Panc1 (cell line): ENCODE measurements at regions of chr4 and their contacts with region 1.

Region 1: DNA sequence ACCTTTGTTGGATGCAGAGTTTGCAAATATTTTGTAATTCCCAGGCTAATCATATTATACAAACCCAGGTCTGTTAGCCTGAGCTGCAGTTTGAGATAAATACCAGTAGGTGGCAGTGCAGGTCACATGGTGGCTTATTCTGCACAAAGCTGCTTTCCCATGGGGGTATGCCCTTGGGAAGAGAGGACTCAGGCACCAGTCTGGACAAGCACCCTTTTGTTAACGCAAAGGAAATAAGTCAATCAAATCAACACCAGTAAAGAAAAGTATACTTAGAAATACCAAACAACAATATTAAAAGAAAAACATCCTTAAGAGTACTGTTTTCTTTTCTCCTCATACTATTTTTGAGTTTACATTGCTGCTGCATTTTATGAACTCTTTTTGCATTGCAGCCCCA is 389.0 kb upstream of the ZFP42 start:
- DNase-seq: peak; percentile 36
- ATAC-seq: peak; percentile 80; the same call in 1 of the 2 replicates
- H3K4me3 ChIP-seq: no peak overlapping the region
- H3K27ac ChIP-seq: no peak overlapping the region
- H3K4me1 ChIP-seq: no peaks in the 10 kb centered on the region
- H3K27me3 ChIP-seq: no peaks in the 10 kb centered on the region
- CTCF ChIP-seq: peak; percentile 84

Region 2: DNA sequence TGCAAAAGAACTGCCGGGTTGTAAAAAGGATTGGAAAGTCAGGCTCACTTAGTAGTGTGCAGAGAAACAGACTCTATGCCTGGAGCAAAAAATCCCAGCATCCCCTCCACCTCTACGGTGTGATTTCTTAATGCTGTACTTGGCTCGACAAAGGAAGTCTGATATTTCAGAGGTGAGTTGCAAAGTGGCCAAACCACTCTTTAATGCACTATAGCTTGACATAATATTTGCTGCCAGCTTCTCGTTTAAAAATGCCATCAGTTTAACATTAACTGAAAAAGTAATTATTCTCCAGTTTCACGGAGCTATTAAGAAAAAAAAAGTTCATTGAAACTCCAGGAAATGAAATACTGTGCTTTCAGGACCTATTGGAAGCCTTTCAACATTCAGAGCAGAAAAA is 59.3 kb before region 1 on chr4:
- CTCF ChIA-PET with region 1: no interaction called
- POLR2A ChIA-PET with region 1: no interaction called
- in situ Hi-C with region 1: no loop called
- intact Hi-C with region 1: no loop called
- DNase-seq: no peak
- ATAC-seq: no peak
- H3K4me3 ChIP-seq: no peak overlapping the region
- H3K27ac ChIP-seq: no peak overlapping the region
- H3K4me1 ChIP-seq: no peaks in the 10 kb centered on the region
- H3K27me3 ChIP-seq: no peaks in the 10 kb centered on the region
- CTCF ChIP-seq: no peak

Region 3: DNA sequence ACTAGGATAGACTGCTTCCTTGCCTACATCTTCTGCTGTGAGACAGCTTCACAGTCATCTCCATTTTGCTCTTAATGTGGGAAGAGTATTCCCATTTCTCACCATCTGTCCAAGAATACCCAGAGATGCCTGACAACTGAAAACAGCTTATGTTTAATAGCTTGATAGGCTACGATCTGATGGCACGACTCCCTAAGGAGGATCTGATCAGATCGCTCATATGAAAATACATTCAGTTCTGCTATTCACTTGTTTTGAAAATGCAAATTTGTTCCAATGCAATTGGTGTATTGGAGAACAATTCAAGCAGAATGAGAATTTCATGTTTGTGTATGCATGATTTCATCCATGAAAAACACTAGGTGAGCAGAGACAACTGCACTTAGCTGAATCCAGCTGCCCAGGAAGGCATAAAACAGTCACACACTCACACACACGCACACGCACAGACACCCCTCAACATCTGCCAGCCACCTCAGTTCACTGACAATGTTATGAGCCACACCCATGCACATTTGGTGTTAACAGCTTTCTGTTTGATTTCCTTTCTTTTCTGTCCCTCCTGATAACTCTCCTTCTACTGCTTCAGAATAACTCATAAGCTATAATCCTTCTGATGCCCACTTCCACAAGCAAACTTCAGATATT is 562.3 kb after region 1 on chr4:
- CTCF ChIA-PET with region 1: no interaction called
- POLR2A ChIA-PET with region 1: no interaction called
- in situ Hi-C with region 1: no loop called
- intact Hi-C with region 1: no loop called
- DNase-seq: no peak
- ATAC-seq: no peak
- H3K4me3 ChIP-seq: no peak overlapping the region
- H3K27ac ChIP-seq: no peak overlapping the region
- H3K4me1 ChIP-seq: no peaks in the 10 kb centered on the region
- H3K27me3 ChIP-seq: no peaks in the 10 kb centered on the region
- CTCF ChIP-seq: no peak

Region 4: DNA sequence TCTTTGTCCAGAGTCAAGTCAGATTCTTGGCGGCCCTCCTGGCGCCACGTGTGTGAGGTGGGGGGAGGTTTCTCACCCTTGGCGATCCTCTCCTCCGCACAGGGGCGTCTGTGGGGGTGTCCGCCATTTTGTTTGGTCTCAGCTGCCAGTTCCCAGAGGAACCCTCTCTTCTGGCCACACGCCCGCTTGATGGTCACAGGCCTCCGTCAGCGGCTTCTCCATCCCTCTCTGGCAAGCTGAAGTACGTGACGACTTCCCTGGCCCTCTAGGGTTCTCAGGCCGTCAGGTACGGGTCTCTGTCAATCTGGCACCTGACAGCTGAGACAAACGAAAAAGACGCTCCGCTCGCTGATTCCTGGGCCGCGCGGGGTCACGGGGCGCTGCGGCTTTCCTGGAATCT is 805.2 kb after region 1 on chr4:
- CTCF ChIA-PET with region 1: no interaction called
- POLR2A ChIA-PET with region 1: no interaction called
- in situ Hi-C with region 1: no loop called
- intact Hi-C with region 1: loop called (anchors 5 kb)
- DNase-seq: no peak
- ATAC-seq: no peak
- H3K4me3 ChIP-seq: no peak overlapping the region
- H3K27ac ChIP-seq: no peak overlapping the region
- H3K4me1 ChIP-seq: no peaks in the 10 kb centered on the region
- H3K27me3 ChIP-seq: no peaks in the 10 kb centered on the region
- CTCF ChIP-seq: no peak